A549 (cell line): ENCODE measurements at regions of chr5 and their contacts with region 1.

Region 1: DNA sequence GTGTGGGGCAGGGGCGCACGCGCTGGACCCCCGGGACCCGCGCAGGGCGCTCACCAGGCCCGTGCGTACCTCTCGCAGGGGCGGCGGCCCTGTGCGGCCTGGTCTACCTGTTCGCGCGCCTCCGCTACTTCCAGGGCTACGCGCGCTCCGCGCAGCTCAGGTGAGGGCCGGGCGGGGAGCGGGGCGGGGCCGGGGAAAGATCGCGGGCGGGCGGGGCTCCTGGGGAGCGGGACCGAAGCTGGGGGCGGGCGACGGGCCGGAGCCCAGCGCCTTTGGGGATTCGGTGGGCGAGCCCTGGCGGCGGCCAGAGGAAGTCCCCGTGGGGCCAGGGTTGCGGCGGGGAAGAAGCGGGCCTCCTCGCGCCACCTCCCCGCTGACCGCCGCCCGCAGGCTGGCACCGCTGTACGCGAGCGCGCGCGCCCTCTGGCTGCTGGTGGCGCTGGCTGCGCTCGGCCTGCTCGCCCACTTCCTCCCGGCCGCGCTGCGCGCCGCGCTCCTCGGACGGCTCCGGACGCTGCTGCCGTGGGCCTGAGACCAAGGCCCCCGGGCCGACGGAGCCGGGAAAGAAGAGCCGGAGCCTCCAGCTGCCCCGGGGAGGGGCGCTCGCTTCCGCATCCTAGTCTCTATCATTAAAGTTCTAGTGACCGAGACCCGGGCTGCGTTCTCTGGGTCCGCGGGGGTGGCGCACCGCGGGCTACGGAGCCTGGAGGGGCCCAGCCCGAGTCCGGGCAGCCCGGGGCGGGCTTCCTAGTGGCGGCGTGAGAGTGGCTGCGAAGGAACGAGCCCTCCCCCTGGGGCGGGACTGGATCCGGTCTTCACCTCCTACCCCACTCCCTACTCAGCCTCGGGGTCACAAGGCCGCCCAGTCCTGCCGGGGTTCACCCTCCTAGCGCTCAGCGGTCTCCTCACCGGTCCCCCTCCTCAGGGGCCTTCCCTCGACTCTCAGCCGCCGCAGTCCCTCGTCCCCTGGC is 2.4 kb downstream of the LTC4S start:
- DNase-seq: peak in 1 of 2 experiments; percentile 84
- ATAC-seq: peak; percentile 63 to 83
- H3K4me3 ChIP-seq: peak overlapping the region; percentile 59
- H3K27ac ChIP-seq: peak overlapping the region; percentile 82 to 90
- H3K4me1 ChIP-seq: peaks cover 14% of the 10 kb centered on the region; the same call in 2 of the 3 replicates
- CTCF ChIP-seq: peak; percentile 89
- EP300 ChIP-seq: no peak
- POLR2A ChIP-seq: peak; percentile 28; the same call in 1 of the 2 replicates
- RAD21 ChIP-seq: peak; percentile 39 to 67; a peak in 4 of 5 replicates

Region 2: GRCh38 chr5:179137643-179138567 is 658.2 kb before region 1 on chr5:
- CTCF ChIA-PET with region 1: no interaction called
- POLR2A ChIA-PET with region 1: no interaction called
- DNase-seq: no peak
- ATAC-seq: no peak
- H3K4me3 ChIP-seq: no peak overlapping the region
- H3K27ac ChIP-seq: no peak overlapping the region
- H3K4me1 ChIP-seq: no peaks in the 10 kb centered on the region
- CTCF ChIP-seq: no peak
- EP300 ChIP-seq: no peak
- POLR2A ChIP-seq: no peak
- RAD21 ChIP-seq: no peak

Region 3: DNA sequence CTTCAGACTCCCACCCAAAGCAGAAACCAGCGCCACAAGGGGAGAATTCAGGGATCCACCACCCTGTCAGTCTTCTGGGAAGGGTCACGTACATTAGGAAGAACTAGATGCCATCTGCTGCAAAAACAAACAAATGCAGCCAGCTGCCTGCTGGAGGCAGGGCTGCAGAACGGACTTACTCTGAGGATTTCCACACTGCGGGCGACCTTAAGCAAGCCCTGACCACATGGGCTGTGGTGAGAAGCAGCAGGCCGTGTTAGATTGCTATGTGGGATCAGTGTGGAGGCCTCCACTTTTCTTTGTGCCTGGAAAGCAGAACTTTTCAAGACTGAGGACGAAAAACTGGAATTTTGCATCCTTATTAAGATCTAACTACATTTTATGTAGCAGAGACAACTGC is 15.8 kb before region 1 on chr5:
- CTCF ChIA-PET with region 1: interaction called, 68 read pairs
- POLR2A ChIA-PET with region 1: interaction called, 3 read pairs
- DNase-seq: no peak
- ATAC-seq: no peak
- H3K4me3 ChIP-seq: no peak overlapping the region
- H3K27ac ChIP-seq: no peak overlapping the region
- H3K4me1 ChIP-seq: no peaks in the 10 kb centered on the region
- CTCF ChIP-seq: no peak
- EP300 ChIP-seq: no peak
- POLR2A ChIP-seq: no peak
- RAD21 ChIP-seq: no peak

Region 4: GRCh38 chr5:179812135-179812846 is 16.1 kb after region 1 on chr5:
- CTCF ChIA-PET with region 1: interaction called, 32 read pairs
- POLR2A ChIA-PET with region 1: no interaction called
- DNase-seq: no peak
- ATAC-seq: no peak
- H3K4me3 ChIP-seq: no peak overlapping the region
- H3K27ac ChIP-seq: no peak overlapping the region
- H3K4me1 ChIP-seq: peaks cover 11% of the 10 kb centered on the region; the same call in 2 of the 3 replicates
- CTCF ChIP-seq: no peak
- EP300 ChIP-seq: no peak
- POLR2A ChIP-seq: no peak
- RAD21 ChIP-seq: no peak

Region 5: DNA sequence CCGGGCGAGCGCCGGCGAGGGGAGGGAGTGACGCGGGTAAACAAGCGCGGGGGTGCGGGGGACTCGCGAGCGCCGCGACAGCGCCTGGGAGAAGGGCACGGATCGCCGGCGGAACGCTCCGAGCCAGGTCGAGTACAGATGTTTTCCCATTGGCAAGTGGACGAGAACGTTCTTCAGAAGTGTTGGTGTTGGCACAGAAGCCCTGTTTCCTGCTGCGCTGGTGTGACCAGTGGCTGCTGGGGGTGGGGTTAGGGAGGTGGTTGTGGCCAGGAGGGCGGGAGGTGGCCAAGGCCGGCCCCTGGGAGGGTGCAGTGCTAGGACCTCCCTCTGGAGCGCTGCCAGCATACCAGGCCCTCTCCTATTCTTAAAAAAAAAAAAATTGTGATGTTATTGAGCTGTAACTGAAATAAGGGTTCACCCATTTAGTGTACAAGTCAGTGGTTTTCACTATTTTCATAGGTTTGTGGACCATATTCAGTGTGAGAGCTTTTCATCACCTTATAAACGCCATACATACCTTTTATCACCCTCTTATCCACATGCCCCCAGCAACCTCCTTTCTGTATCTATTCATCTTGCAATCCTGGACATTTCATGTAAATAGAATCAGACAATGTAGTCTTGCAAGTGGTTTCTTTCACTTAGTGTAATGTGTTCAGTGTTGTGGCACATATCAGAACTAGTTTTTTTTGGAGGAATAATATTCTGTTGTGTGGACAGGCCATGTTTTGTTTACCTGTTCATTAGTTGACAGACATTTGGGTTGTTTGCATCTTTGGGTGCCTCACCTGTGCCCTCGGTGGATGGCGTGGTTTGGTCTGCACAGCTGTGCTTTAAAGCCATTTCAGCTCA is 25.7 kb after region 1 on chr5:
- CTCF ChIA-PET with region 1: interaction called, 86 read pairs
- POLR2A ChIA-PET with region 1: interaction called, 3 read pairs
- DNase-seq: peak; percentile 92 to 95
- ATAC-seq: peak; percentile 16 to 65; a peak in 3 of 6 replicates
- H3K4me3 ChIP-seq: peak overlapping the region; percentile 81
- H3K27ac ChIP-seq: peak overlapping the region; percentile 95 to 98
- H3K4me1 ChIP-seq: peaks cover 73% of the 10 kb centered on the region
- CTCF ChIP-seq: no peak
- EP300 ChIP-seq: no peak
- POLR2A ChIP-seq: peak; percentile 75
- RAD21 ChIP-seq: no peak